ENCODE measurements at regions of chr5 and their contacts with region 1.

Region 1: DNA sequence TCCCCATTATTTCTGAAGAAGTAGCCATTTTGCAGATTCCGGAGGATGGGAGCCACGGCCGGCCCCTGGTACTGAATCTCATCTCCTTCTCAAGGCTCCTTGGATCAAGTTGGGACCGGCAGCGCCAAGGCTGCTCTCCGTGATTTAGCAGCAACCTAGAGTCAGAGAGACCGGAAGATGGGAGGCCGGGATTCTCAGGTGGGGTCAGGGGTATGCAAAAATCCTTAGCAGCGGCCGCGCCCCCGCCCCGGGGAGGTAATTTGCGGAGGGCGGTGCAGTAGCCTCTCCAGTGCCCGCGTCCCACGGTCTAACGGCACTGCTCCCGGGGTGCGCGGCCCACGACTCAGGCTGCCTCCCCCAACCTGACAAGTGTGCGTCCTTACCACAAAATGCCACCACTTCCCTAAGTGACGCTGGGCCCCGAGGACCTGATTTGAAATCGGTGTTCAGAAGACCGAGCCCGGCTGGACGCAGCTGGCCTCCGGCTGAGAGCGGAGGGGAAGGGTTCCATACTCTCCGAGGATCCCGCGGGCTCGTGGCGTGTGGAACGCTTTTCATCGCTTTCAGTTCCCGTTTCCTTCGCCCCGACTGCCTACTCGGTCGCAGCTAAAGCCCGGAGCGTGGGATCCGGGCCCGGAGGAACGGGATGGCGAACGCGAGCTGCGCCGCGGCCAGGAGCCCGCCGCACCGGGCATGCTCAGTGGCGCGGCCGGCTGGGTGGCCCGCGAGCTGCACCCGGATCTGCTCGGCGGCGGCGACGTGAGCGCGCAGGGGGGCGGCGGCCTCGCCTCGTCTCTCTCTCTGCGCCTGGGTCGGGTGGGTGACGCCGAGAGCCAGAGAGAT is at the start of gene SCAMP1:
- DNase-seq: peak; percentile 93
- ATAC-seq: peak; percentile 98
- total RNA-seq, gene SCAMP1: 32.8 to 38.0 TPM

Region 2: GRCh38 chr5:78294248-78295034 is 65.6 kb before region 1 on chr5 and contains the start of gene AP3B1:
- intact Hi-C with region 1: loop called (anchors 1 to 5 kb)
- DNase-seq: peak; percentile 100
- ATAC-seq: peak; percentile 98 to 99
- total RNA-seq, gene AP3B1: 25.3 to 32.7 TPM